SK-N-SH (cell line): ENCODE measurements at regions of chr7 and their contacts with region 1.

Region 1: DNA sequence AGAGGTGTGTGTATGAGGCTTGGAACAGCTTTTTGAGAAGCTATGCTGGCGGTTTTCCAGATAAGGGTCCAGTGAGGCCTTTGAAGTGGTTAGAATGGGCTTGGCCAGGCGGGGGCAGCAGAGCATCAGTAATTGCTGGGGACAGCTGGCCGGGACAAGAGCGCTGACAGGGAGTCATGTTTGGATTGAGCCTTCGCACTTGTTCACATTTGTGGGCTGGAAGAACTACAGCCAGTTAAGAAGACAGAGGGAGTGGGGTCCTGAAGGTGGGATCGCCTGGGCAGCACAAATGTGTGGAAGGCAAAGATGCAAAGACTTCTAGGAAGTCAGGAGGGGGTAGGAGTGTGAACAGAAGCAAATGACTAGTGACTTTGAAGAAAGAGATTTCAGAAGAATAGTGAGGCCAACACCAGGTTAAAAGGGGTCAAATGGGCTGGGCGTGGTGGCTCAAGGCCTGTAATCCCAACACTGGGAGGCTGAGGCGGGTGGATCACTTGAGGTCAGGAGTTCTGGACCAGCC is 12.7 kb upstream of the SDHAF3 start:
- DNase-seq: peak; percentile 87
- H3K4me3 ChIP-seq: no peak overlapping the region
- H3K27ac ChIP-seq: no peak overlapping the region
- H3K4me1 ChIP-seq: no peaks in the 10 kb centered on the region
- H3K27me3 ChIP-seq: 0 out of 2 replicates have a peak, but pooled peaks cover 3% of the 10 kb centered on the region
- CTCF ChIP-seq: peak; percentile 95
- EP300 ChIP-seq: no peak
- RAD21 ChIP-seq: peak; percentile 99

Region 2: DNA sequence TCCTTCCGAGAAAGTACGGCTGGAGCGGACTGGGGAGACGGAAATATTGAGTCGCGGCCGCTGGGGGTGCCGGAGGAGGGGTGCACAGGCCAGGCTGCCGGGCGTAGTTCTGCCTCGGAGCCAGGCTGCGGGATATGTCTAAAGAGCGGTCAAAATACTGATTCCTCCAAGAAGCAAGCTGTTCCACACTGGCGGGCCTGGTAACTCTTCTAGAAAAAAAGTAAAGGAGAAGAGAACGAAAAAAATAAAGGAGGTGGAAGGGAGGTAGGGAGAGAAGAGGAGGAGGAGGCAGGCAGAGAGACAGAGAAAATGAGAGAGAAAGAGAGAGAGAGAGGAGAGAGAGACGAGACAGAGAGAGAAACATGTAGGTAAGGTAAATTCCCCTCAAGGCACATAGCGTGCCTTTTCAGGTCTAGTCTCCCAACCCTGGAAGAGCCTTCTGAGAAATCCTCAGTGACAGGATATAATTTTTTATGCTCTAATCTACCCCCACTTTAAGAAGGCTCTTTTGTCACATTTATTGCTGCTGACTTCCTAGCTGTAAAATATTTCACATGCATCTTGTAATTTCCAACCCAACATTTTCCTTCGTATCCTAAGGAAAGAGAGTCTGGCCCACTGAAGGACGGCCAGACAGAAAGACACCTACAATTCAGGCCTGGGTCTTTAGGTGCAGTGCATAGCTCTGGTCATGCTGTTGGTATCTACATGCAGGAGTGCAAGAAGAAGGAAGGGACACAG is 85.8 kb before region 1 on chr7:
- CTCF ChIA-PET with region 1: no interaction called
- POLR2A ChIA-PET with region 1: no interaction called
- DNase-seq: no peak
- H3K4me3 ChIP-seq: no peak overlapping the region
- H3K27ac ChIP-seq: no peak overlapping the region
- H3K4me1 ChIP-seq: peaks cover 0 to 12% of the 10 kb centered on the region in 2 experiments; a peak in 3 of 4 replicates
- H3K27me3 ChIP-seq: peaks cover 31% of the 10 kb centered on the region
- CTCF ChIP-seq: no peak
- EP300 ChIP-seq: no peak
- RAD21 ChIP-seq: no peak

Region 3: GRCh38 chr7:97078023-97078969 is 26.5 kb before region 1 on chr7:
- CTCF ChIA-PET with region 1: interaction called, 15 read pairs
- POLR2A ChIA-PET with region 1: no interaction called
- DNase-seq: no peak
- H3K4me3 ChIP-seq: no peak overlapping the region
- H3K27ac ChIP-seq: no peak overlapping the region
- H3K4me1 ChIP-seq: no peaks in the 10 kb centered on the region
- H3K27me3 ChIP-seq: no peaks in the 10 kb centered on the region
- CTCF ChIP-seq: no peak
- EP300 ChIP-seq: no peak
- RAD21 ChIP-seq: no peak

Region 4: GRCh38 chr7:97117372-97118188 is 12.8 kb after region 1 on chr7 and contains the start of gene SDHAF3:
- CTCF ChIA-PET with region 1: interaction called, 48 read pairs
- POLR2A ChIA-PET with region 1: interaction called, 4 read pairs
- DNase-seq: peak; percentile 97
- H3K4me3 ChIP-seq: peak within 1 kb of the TSS; percentile 90 to 100
- H3K27ac ChIP-seq: peak within 1 kb of the TSS; percentile 60 to 94
- H3K4me1 ChIP-seq: peaks cover 0 to 11% of the 10 kb centered on the region in 2 experiments; a peak in 2 of 4 replicates
- H3K27me3 ChIP-seq: no peaks in the 10 kb centered on the region
- CTCF ChIP-seq: peak; percentile 25
- EP300 ChIP-seq: peak in 1 of 2 experiments; percentile 63; a peak in 3 of 4 replicates
- RAD21 ChIP-seq: no peak
- polyA plus RNA-seq, gene SDHAF3: 14.6 and 17.0 TPM in 2 replicates

Region 5: DNA sequence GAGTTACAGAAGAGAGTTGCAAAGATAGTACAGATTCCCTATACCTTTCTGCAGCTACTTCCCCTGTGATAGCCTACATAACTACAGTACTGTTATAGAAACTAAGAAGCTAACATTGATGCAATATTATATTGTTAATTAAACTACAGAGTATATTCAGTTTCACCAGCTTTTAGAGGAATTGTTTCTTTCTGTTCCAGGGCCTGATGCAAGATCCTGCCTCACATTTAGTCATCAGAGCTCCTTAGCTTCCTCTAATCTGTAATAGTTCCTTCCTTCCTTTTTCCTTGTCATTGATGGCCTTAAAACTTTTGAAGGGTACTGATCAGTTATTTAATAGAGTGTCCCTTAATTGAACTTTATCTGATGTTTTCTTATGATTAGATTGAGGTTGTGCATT is 69.5 kb after region 1 on chr7:
- CTCF ChIA-PET with region 1: interaction called, 20 read pairs
- POLR2A ChIA-PET with region 1: no interaction called
- DNase-seq: no peak
- H3K4me3 ChIP-seq: no peak overlapping the region
- H3K27ac ChIP-seq: no peak overlapping the region
- H3K4me1 ChIP-seq: no peaks in the 10 kb centered on the region; a peak in 1 of 4 replicates
- H3K27me3 ChIP-seq: no peaks in the 10 kb centered on the region
- CTCF ChIP-seq: no peak
- EP300 ChIP-seq: no peak
- RAD21 ChIP-seq: no peak

Region 6: DNA sequence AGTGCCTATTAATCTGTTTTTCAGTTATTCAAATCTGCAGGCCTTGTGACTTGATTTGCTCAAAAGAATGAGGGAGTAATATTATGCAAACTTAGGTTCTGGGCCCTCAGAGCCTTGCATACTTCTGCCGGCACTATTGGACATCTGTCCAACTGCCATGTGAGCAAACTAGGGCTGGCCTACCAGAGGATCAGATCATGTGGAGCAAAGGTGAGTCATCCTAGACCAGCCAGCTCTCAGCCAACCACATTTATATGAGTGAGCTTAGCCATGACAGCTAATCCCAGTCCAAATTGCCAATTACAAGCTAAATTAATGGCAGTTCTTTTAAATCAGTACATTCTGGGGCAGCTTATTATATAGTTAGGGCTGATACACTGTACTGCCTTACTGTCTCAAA is 82.3 kb after region 1 on chr7:
- CTCF ChIA-PET with region 1: interaction called, 40 read pairs
- POLR2A ChIA-PET with region 1: no interaction called
- DNase-seq: no peak
- H3K4me3 ChIP-seq: no peak overlapping the region
- H3K27ac ChIP-seq: no peak overlapping the region
- H3K4me1 ChIP-seq: no peaks in the 10 kb centered on the region
- H3K27me3 ChIP-seq: no peaks in the 10 kb centered on the region
- CTCF ChIP-seq: no peak
- EP300 ChIP-seq: no peak
- RAD21 ChIP-seq: no peak

Region 7: GRCh38 chr7:97845622-97846203 is 740.9 kb after region 1 on chr7:
- CTCF ChIA-PET with region 1: interaction called, 29 read pairs
- POLR2A ChIA-PET with region 1: no interaction called
- DNase-seq: peak; percentile 52
- H3K4me3 ChIP-seq: no peak overlapping the region
- H3K27ac ChIP-seq: no peak overlapping the region
- H3K4me1 ChIP-seq: no peaks in the 10 kb centered on the region
- H3K27me3 ChIP-seq: peaks cover 13% of the 10 kb centered on the region
- CTCF ChIP-seq: peak; percentile 75
- EP300 ChIP-seq: no peak
- RAD21 ChIP-seq: peak; percentile 72